Posterior cingulate gyrus (tissue), 11 donors: ENCODE measurements at regions of chr5 and their contacts with region 1.

Region 1: GRCh38 chr5:849651-850301 is 1.0 kb downstream of the ZDHHC11 start:
- DNase-seq: peak in 7 of 10 donors; percentile 6 to 67 (median 21)

Region 2: GRCh38 chr5:759111-759751 is 90.5 kb before region 1 on chr5:
- intact Hi-C with region 1: loop called (anchors 5 kb)
- DNase-seq: peak in 5 of 10 donors; percentile 4 to 84 (median 80)